H1 (cell line): ENCODE measurements at regions of chr1 and their contacts with region 1.

Region 1: GRCh38 chr1:21270086-21270689 is 20.1 kb downstream of the ECE1 start:
- DNase-seq: peak; percentile 63 to 99
- H3K4me3 ChIP-seq: no peak overlapping the region
- H3K27ac ChIP-seq: no peak overlapping the region
- H3K4me1 ChIP-seq: no peaks in the 10 kb centered on the region; a peak in 2 of 7 replicates
- H3K27me3 ChIP-seq: no peaks in the 10 kb centered on the region
- CTCF ChIP-seq: peak; percentile 99 to 100 (median 100)
- EP300 ChIP-seq: no peak
- POLR2A ChIP-seq: no peak
- RAD21 ChIP-seq: peak; percentile 79 to 84

Region 2: DNA sequence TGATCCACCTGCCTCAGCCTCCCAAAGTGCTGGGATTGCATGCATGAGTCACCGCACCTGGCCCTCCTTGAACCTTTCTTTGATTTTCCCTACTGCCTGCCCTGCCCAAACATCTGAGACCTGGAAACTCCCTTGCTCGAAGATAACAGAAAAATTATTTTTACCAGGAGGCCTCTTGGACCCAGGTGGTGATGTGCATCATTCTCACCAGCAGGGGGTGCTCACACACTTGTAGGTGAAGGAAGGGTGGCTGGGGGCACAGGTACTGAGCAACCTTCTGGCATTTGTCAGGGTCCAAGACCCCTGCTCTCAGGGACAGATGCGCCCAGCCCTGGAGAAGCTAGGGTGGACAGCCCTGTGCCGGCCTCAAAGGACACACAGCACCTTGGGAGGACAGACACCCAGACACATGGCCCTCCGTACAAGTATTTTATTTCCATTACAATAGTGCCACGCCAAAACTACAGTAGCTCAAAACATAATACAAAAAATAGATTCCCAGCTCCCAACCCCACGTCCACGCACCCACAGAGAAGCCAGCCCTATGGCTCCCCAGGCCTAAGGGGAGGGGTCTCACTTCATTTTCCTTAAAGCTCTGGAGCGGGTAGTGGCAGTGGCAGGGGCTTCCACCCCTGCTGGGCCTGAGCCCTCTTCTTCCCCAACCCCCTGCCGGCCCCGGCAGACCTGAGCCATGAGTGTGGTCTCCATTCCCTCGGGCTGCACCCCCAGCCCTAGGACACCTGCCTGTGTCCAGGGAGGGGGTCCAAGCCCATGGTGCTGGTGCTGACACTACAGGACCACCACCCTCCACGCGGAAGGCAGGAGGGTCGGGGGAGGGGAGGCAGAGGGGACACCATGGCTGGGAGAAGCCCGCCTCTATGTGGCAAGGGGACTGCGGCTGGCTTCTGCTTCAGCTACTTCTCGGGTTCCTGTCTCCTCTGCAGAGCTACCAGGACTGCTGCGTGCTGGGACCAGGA is 53.1 kb before region 1 on chr1:
- CTCF ChIA-PET with region 1: interaction called, 11 read pairs
- POLR2A ChIA-PET with region 1: no interaction called
- DNase-seq: peak in 1 of 2 experiments; percentile 88
- H3K4me3 ChIP-seq: no peak overlapping the region
- H3K27ac ChIP-seq: no peak overlapping the region
- H3K4me1 ChIP-seq: peaks cover 0 to 5% (median 5%) of the 10 kb centered on the region in 4 experiments; a peak in 5 of 7 replicates
- H3K27me3 ChIP-seq: no peaks in the 10 kb centered on the region
- CTCF ChIP-seq: peak; percentile 60 to 86 (median 80)
- EP300 ChIP-seq: no peak
- POLR2A ChIP-seq: no peak
- RAD21 ChIP-seq: peak; percentile 43 to 67; a peak in 3 of 4 replicates

Region 3: DNA sequence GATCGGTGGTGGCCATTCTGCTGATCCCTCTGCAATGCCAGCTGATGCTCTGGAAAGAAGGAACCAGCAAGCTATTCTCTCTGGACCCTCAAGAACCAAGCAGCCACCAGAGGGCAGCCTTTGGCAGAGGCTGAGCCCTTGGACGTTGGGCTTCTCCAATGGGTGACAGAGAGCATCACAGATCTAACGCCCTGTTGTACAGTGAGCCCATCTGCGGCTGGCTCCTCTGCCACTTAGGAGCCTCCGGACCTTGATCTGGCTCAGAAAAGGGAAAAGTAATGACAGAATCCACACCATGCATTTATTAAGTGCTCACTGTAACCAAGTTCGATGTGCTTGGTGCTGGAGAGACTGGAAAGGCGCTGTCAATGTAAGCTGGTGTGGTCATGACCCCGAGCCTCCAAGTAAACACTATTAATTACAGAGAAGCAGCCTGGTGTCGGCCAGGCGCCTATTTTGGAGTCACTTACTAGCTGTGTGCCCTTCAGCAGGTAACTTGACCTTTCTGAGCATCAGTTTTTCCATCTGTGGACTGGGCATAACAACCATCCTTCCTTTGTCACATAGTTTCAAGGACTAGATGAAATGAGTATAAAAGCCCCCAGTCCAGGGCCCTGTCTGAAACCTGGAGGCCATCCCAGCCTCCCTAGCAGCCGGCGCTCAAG is 14.8 kb before region 1 on chr1:
- CTCF ChIA-PET with region 1: interaction called, 278 read pairs
- POLR2A ChIA-PET with region 1: interaction called, 4 read pairs
- DNase-seq: peak; percentile 62 to 95
- H3K4me3 ChIP-seq: no peak overlapping the region
- H3K27ac ChIP-seq: no peak overlapping the region
- H3K4me1 ChIP-seq: no peaks in the 10 kb centered on the region
- H3K27me3 ChIP-seq: no peaks in the 10 kb centered on the region
- CTCF ChIP-seq: peak; percentile 82 to 98 (median 97)
- EP300 ChIP-seq: no peak
- POLR2A ChIP-seq: no peak
- RAD21 ChIP-seq: peak; percentile 95 to 96

Region 4: GRCh38 chr1:21308847-21309652 is 38.9 kb after region 1 on chr1:
- CTCF ChIA-PET with region 1: interaction called, 73 read pairs
- POLR2A ChIA-PET with region 1: interaction called, 3 read pairs
- DNase-seq: no peak
- H3K4me3 ChIP-seq: no peak overlapping the region
- H3K27ac ChIP-seq: no peak overlapping the region
- H3K4me1 ChIP-seq: peaks cover 15 to 40% (median 22%) of the 10 kb centered on the region in 4 experiments
- H3K27me3 ChIP-seq: no peaks in the 10 kb centered on the region
- CTCF ChIP-seq: no peak
- EP300 ChIP-seq: no peak
- POLR2A ChIP-seq: no peak
- RAD21 ChIP-seq: no peak

Region 5: DNA sequence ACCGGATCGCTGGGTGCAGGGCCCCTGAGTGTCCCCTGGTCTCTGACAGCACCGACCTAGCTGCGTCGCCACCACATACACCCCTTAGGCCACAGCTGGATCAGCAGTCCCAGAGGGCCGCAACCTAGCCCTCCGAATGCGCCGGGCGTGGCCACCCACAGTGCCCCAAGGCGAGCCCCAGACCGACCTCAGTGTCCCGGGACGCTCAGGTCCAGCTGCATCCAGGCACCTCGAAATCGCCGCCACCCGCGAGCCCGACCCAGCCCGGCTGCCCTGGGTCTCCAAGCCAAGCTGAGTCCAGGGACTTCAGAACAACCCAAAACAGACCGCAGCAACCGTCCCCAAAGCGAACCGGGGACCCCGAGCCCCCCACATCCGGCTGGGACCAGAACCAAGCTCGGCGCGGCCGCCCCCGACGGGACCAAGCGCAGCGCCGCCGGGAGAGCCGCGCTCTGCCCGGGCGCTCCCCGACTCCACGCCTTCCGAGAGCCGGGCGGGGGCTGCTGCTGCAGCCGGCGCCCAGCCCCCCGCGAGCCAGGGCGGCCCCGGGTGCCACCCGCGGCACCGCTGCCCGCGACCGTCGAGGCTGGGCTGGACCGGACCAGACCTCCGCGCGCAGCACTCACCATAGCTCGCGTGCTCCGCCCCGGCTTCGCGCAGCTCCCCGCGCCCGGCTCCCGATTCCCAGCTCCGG is 74.7 kb after region 1 on chr1:
- CTCF ChIA-PET with region 1: interaction called, 167 read pairs
- POLR2A ChIA-PET with region 1: no interaction called
- DNase-seq: peak in 1 of 2 experiments; percentile 65
- H3K4me3 ChIP-seq: peak overlapping the region; percentile 52 to 78 (median 70)
- H3K27ac ChIP-seq: no peak overlapping the region
- H3K4me1 ChIP-seq: peaks cover 3 to 12% (median 5%) of the 10 kb centered on the region in 4 experiments
- H3K27me3 ChIP-seq: peaks cover 0 to 20% (median 15%) of the 10 kb centered on the region in 4 experiments; a peak in 6 of 7 replicates
- CTCF ChIP-seq: no peak
- EP300 ChIP-seq: no peak
- POLR2A ChIP-seq: no peak
- RAD21 ChIP-seq: no peak

Region 6: GRCh38 chr1:21362096-21362495 is 91.9 kb after region 1 on chr1:
- CTCF ChIA-PET with region 1: interaction called, 144 read pairs
- POLR2A ChIA-PET with region 1: no interaction called
- DNase-seq: no peak
- H3K4me3 ChIP-seq: no peak overlapping the region
- H3K27ac ChIP-seq: no peak overlapping the region
- H3K4me1 ChIP-seq: no peaks in the 10 kb centered on the region
- H3K27me3 ChIP-seq: no peaks in the 10 kb centered on the region
- CTCF ChIP-seq: no peak
- EP300 ChIP-seq: no peak
- POLR2A ChIP-seq: no peak
- RAD21 ChIP-seq: no peak

Region 7: DNA sequence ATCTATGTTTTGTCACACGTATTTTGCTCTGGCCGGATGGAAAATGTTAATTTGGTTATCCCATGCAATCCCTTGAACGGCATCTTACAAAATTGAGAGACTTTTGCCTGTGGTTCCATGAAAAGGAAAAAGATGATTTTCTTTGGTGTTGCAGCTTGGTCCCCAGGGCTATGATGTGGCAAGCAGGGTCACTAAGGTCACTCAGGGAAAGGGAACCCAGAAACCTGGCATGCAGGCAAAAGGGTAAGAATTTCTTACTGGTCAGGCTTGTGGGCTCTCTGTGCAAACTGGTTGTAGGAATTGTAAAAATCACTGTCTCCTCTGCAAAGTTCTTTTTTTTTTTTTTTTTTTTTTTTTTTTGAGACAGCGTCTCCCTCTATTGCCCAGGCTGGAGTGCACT is 121.3 kb after region 1 on chr1:
- CTCF ChIA-PET with region 1: no interaction called
- POLR2A ChIA-PET with region 1: no interaction called
- DNase-seq: no peak
- H3K4me3 ChIP-seq: no peak overlapping the region
- H3K27ac ChIP-seq: no peak overlapping the region
- H3K4me1 ChIP-seq: no peaks in the 10 kb centered on the region
- H3K27me3 ChIP-seq: no peaks in the 10 kb centered on the region
- CTCF ChIP-seq: no peak
- EP300 ChIP-seq: no peak
- POLR2A ChIP-seq: no peak
- RAD21 ChIP-seq: no peak